ENCODE measurements at regions of chr15 and their contacts with region 1.

Region 1: GRCh38 chr15:51982013-51982769 is 10.6 kb upstream of the LEO1 start:
- DNase-seq: peak; percentile 75
- ATAC-seq: peak; percentile 91
- H3K4me3 ChIP-seq: peak overlapping the region; percentile 28 to 45 (median 38)
- H3K27ac ChIP-seq: peak overlapping the region; percentile 74
- H3K4me1 ChIP-seq: peaks cover 40% of the 10 kb centered on the region
- H3K27me3 ChIP-seq: no peaks in the 10 kb centered on the region
- CTCF ChIP-seq: peak; percentile 82
- EP300 ChIP-seq: no peak
- POLR2A ChIP-seq: peak in 1 of 2 experiments; percentile 53; a peak in 2 of 4 replicates
- RAD21 ChIP-seq: peak; percentile 76

Region 2: DNA sequence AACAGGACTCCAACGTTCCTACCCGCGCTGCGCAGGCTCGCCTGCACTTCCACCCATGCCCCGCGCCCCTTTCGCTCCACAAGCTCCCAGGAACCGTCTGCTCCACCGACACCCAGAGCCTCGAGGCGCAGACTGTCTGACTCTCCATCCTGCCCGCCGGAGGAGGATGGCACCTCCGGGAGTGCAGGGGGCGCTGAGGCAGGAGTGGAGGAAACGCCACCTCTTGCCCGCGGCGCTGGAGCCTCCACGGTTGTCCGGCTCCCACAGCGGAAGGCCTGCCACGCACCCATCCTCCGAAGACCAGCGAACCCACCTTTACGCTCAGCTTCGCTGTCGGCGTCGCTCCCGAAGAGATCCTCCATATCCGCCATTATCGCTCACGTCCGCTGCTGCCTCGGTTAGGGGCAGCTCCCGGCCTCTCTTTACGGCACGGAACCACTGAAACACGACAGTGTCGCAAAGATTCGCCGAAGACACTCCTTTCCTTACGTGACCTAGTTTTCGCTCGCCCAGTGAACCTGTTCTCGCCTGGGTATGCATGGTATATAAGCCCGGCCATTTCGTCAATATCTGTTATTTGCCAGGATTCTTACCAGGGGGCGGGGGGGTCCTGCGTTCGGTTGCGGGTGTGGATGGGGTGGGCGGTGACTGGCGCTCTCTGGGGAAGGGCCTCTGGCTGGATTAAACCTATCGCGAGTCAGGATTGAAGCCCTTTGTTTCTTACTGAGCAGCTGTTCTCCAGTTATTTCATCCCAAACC is 10.6 kb before region 1 on chr15 and contains the start of gene LEO1:
- CTCF ChIA-PET with region 1: no interaction called
- POLR2A ChIA-PET with region 1: interaction called, 48 read pairs
- in situ Hi-C with region 1: no loop called
- intact Hi-C with region 1: loop called (anchors 1 kb)
- DNase-seq: peak; percentile 96
- ATAC-seq: peak; percentile 89
- H3K4me3 ChIP-seq: peak within 1 kb of the TSS; percentile 70 to 100 (median 97)
- H3K27ac ChIP-seq: peak within 1 kb of the TSS; percentile 79
- H3K4me1 ChIP-seq: peaks cover 41% of the 10 kb centered on the region
- H3K27me3 ChIP-seq: no peaks in the 10 kb centered on the region; a peak in 1 of 5 replicates
- CTCF ChIP-seq: peak; percentile 64
- EP300 ChIP-seq: no peak
- POLR2A ChIP-seq: peak; percentile 76 to 77; a peak in 3 of 4 replicates
- RAD21 ChIP-seq: no peak
- total RNA-seq, gene LEO1: 60.3 and 103 TPM in 2 replicates

Region 3: GRCh38 chr15:52018693-52019387 is 36.6 kb after region 1 on chr15 and contains the start of gene MAPK6:
- CTCF ChIA-PET with region 1: no interaction called
- POLR2A ChIA-PET with region 1: interaction called, 5 read pairs
- in situ Hi-C with region 1: no loop called
- intact Hi-C with region 1: loop called (anchors 2 kb)
- DNase-seq: peak; percentile 80
- ATAC-seq: peak; percentile 68
- H3K4me3 ChIP-seq: peak within 1 kb of the TSS; percentile 62 to 99 (median 77)
- H3K27ac ChIP-seq: peak within 1 kb of the TSS; percentile 99
- H3K4me1 ChIP-seq: peaks cover 38% of the 10 kb centered on the region
- H3K27me3 ChIP-seq: no peaks in the 10 kb centered on the region; a peak in 1 of 5 replicates
- CTCF ChIP-seq: 0 out of 2 replicates have a peak, but pooled peaks have one; percentile 11
- EP300 ChIP-seq: peak; percentile 11 to 23; a peak in 1 of 4 replicates
- POLR2A ChIP-seq: peak; percentile 81 to 87
- RAD21 ChIP-seq: peak; percentile 49; the same call in 1 of the 2 replicates
- total RNA-seq, gene MAPK6: 99.7 and 188 TPM in 2 replicates

Region 4: DNA sequence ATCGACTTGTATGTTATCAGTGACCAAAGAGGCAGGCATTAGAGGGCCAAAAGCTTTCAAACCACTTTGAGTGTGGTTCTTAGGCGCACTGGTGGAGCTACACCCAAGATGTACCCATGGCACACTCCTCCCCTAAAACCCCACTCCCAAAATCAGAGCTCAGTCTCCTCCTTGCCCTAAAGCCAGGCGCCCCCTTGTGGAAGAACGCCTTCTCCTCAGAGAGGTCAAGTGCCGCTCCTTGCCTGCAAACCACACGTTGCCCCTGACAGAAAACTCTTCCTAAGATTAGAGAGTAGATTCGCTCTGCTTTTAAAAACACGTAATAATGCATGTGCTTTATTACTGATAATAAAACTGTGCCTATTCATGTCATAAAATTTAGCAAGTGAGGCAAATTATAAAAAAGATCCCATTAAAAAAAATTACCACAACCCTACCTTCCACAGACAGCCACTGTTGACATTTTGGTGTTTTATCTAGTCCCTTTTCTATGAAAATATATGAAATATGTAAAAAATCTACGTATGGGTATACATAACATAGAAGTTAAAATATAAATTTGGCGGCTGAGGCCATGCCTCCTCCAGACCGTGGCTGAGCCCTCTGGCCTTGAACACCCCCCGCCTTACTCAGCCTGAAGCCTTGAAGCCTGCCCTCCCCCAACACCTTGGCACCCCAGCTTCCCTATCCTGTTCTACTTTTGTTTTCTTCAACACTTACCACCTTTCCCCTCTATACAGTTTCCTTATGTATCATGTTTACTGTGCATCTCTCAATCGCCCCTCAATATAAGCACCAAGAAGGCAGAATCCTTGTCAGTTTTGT is 96.9 kb after region 1 on chr15:
- CTCF ChIA-PET with region 1: interaction called, 6 read pairs
- POLR2A ChIA-PET with region 1: interaction called, 13 read pairs
- in situ Hi-C with region 1: loop called (anchors 5 kb)
- intact Hi-C with region 1: loop called (anchors 1 kb)
- DNase-seq: peak; percentile 59
- ATAC-seq: peak; percentile 77
- H3K4me3 ChIP-seq: peak overlapping the region; percentile 43 to 67 (median 45); a peak in 5 of 6 replicates
- H3K27ac ChIP-seq: peak overlapping the region; percentile 46
- H3K4me1 ChIP-seq: peaks cover 36% of the 10 kb centered on the region
- H3K27me3 ChIP-seq: no peaks in the 10 kb centered on the region; a peak in 1 of 5 replicates
- CTCF ChIP-seq: peak; percentile 90
- EP300 ChIP-seq: no peak
- POLR2A ChIP-seq: no peak
- RAD21 ChIP-seq: peak; percentile 74

Region 5: DNA sequence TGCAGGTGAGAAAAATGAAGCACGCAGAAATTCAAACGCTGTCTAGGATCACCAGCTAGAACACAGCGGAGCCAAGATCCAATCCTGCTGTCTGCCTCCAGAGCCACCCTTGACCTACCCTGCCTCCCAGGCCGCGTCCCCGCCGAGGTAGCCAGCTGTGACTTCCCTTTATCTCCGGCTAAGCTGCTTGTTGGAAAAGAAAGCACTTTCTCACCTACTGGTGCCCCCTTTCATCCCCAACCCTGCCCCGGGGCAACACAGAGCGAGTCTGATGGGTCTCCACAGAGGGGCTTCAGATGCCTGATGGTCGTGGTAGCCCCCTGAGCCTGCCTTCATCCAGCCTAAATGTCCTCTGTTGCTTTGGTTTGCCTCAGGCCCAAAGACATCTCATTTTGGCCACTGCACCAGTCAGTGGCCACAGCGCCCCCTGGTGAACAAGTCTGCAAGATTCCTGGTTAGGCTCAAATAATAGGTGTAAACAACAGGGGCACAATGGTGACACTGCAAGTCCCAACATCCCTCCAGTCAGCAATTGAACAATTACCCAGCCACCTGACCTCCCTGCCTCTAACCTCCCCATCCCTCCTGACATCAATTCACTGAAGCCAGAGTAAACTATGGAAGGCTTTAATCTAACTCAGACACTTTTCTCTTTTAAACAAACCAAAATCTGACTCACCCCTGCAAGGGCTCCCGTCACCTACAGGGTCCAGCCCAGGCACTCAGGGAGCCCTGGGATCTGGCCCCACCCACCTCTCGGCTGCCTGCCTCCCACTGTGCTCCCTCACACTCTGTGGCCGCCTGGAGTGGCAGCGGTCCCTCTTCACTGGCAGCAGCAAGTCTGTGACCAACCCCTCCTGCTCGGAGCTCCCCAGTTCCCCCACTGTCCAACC is 157.7 kb after region 1 on chr15:
- CTCF ChIA-PET with region 1: no interaction called
- POLR2A ChIA-PET with region 1: interaction called, 5 read pairs
- in situ Hi-C with region 1: loop called (anchors 5 kb)
- intact Hi-C with region 1: loop called (anchors 2 kb)
- DNase-seq: peak; percentile 60
- ATAC-seq: peak; percentile 50
- H3K4me3 ChIP-seq: no peak overlapping the region
- H3K27ac ChIP-seq: peak overlapping the region; percentile 5
- H3K4me1 ChIP-seq: peaks cover 65% of the 10 kb centered on the region
- H3K27me3 ChIP-seq: no peaks in the 10 kb centered on the region
- CTCF ChIP-seq: peak; percentile 90
- EP300 ChIP-seq: no peak
- POLR2A ChIP-seq: no peak
- RAD21 ChIP-seq: peak; percentile 82

Region 6: DNA sequence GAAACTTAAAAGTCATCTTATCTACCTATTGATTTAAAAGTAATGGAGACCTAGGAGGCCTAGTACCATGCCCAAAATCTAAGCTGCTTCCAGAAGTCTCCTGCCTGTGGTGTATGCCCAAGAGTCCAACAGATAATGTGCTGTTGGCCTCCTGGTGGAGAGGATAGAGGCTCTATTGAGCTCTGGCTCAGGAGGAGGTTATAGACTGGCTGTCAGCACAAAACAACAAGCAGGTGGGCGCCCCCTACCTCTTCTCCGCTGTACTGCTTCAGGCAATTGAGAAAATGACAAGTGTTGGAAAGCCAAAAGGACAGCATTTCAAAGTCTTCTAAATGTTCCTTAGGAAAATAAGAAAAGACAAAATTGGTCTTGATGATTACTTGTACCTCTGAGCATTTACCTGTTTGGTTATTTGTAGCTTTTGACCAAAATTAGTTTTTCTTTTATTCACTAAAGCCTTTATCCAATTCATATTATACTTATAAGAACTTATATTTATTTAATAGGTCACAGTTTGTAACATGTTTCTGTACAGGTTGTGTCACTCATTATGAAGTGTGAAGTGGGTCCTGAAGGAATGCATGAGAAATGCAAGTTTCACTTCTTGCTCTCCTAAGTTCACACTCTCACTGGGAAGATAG is 226.2 kb after region 1 on chr15:
- CTCF ChIA-PET with region 1: no interaction called
- POLR2A ChIA-PET with region 1: no interaction called
- in situ Hi-C with region 1: no loop called
- intact Hi-C with region 1: loop called (anchors 5 kb)
- DNase-seq: peak; percentile 76
- ATAC-seq: peak; percentile 99
- H3K4me3 ChIP-seq: no peak overlapping the region
- H3K27ac ChIP-seq: no peak overlapping the region
- H3K4me1 ChIP-seq: no peaks in the 10 kb centered on the region
- H3K27me3 ChIP-seq: no peaks in the 10 kb centered on the region
- CTCF ChIP-seq: peak; percentile 87
- EP300 ChIP-seq: no peak
- POLR2A ChIP-seq: no peak
- RAD21 ChIP-seq: peak; percentile 68

Region 7: GRCh38 chr15:52227456-52227855 is 245.3 kb after region 1 on chr15:
- CTCF ChIA-PET with region 1: no interaction called
- POLR2A ChIA-PET with region 1: no interaction called
- in situ Hi-C with region 1: no loop called
- intact Hi-C with region 1: loop called (anchors 1 kb)
- DNase-seq: peak; percentile 57
- ATAC-seq: peak; percentile 93
- H3K4me3 ChIP-seq: no peak overlapping the region
- H3K27ac ChIP-seq: no peak overlapping the region
- H3K4me1 ChIP-seq: no peaks in the 10 kb centered on the region
- H3K27me3 ChIP-seq: no peaks in the 10 kb centered on the region
- CTCF ChIP-seq: peak; percentile 79
- EP300 ChIP-seq: no peak
- POLR2A ChIP-seq: no peak
- RAD21 ChIP-seq: no peak

Measured in HepG2 (cell line).